ENCODE measurements at regions of chr3 and their contacts with region 1.

Region 1: DNA sequence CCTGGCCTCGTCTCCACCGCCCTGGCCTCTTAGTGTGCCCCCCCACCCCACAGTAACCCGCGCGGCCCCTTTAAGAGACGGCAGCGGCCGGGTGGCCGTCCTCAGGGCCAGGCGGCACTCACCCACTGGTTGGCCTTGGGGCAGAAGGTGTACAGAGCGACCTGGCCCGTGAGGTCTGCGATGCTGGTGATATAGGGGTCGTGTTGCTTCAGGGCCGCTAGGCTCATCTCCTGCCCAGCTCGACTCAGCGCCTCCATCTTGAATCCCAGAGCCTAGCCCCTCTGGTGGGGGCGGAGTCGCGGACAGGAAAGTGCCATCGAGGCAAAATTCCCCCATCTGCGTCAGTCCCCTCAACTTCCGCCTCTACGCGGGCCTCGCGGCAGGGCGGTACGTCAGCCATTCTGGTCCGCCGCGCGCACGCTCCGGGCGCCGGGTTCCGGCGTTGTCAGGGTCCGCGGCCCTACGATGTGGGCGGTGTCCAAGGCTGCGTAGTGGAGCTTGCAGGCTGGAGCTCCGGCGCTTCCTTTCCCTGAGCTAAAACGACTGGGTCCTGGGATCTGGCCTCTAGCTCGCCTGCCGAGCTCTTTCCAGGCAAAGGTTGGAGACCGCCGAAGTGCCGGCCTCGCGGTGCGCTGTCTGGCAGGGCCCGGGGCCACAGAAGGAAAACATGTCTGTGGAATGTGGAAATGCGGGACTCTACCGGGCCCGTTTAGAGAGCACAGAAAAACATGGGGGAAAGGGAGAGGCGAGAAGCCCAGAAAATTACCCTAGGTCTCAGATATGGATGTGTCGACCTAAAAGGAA is at the start of gene DCP1A:
- DNase-seq: peak; percentile 95
- H3K4me3 ChIP-seq: peak within 1 kb of the TSS; percentile 81 to 87
- H3K27ac ChIP-seq: peak within 1 kb of the TSS; percentile 83 to 91
- H3K4me1 ChIP-seq: peaks cover 2% of the 10 kb centered on the region
- H3K27me3 ChIP-seq: no peaks in the 10 kb centered on the region
- CTCF ChIP-seq: peak in 1 of 4 experiments; percentile 41
- POLR2A ChIP-seq: peak; percentile 93
- total RNA-seq, gene DCP1A: 13.0 to 33.0 TPM

Region 2: DNA sequence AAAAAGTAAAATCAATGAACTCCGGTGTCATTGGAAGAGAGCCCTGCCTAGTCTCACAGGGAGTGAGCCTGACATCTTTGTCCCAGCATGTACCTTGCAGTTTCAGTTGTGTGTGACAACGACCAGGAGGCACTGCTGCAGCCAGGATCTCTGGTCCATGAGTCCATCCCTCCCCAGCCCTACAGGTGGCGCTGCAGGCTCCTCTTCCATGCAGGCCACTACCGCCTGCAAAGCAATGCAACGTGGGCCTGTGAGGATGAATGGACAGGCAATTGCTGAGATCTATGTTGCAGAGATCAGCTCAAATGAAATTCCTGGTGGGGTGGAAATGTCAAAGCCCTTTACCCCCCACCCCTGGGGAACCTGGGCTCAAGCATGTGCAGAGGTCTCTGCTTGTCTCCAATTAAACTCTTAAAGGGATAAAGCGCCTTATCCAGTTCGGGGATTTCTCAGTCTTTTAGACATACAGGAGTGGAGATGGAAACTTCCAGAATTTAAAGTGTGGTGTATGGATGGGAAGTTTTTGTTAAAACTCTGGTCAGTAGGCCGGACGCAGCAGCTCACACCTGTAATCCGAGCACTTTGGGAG is 127.5 kb before region 1 on chr3:
- intact Hi-C with region 1: loop called (anchors 10 kb)
- DNase-seq: peak; percentile 72
- H3K4me3 ChIP-seq: no peak overlapping the region
- H3K27ac ChIP-seq: no peak overlapping the region
- H3K4me1 ChIP-seq: no peaks in the 10 kb centered on the region
- H3K27me3 ChIP-seq: no peaks in the 10 kb centered on the region
- CTCF ChIP-seq: peak; percentile 42 to 88 (median 75)
- POLR2A ChIP-seq: no peak

Region 3: GRCh38 chr3:53688989-53689388 is 341.5 kb after region 1 on chr3:
- intact Hi-C with region 1: no loop called
- DNase-seq: no peak
- H3K4me3 ChIP-seq: no peak overlapping the region
- H3K27ac ChIP-seq: no peak overlapping the region
- H3K4me1 ChIP-seq: no peaks in the 10 kb centered on the region
- H3K27me3 ChIP-seq: no peaks in the 10 kb centered on the region
- CTCF ChIP-seq: no peak
- POLR2A ChIP-seq: no peak